ENCODE measurements at regions of chr19 and their contacts with region 1.

Region 1: GRCh38 chr19:42295831-42296525 is 6.0 kb upstream of the PRR19 start:
- DNase-seq: peak; percentile 76
- H3K4me3 ChIP-seq: no peak overlapping the region
- H3K27ac ChIP-seq: peak overlapping the region; percentile 30
- H3K4me1 ChIP-seq: peaks cover under 1% of the 10 kb centered on the region
- H3K27me3 ChIP-seq: no peaks in the 10 kb centered on the region
- CTCF ChIP-seq: peak; percentile 91

Region 2: GRCh38 chr19:42268704-42269477 is 27.1 kb before region 1 on chr19 and contains the start of gene CIC:
- CTCF ChIA-PET with region 1: no interaction called
- POLR2A ChIA-PET with region 1: no interaction called
- intact Hi-C with region 1: no loop called
- DNase-seq: peak; percentile 100
- H3K4me3 ChIP-seq: peak within 1 kb of the TSS; percentile 62
- H3K27ac ChIP-seq: peak within 1 kb of the TSS; percentile 99
- H3K4me1 ChIP-seq: peaks cover 18% of the 10 kb centered on the region
- H3K27me3 ChIP-seq: no peaks in the 10 kb centered on the region
- CTCF ChIP-seq: no peak
- total RNA-seq, gene CIC: 75.8 and 80.3 TPM in 2 replicates

Region 3: GRCh38 chr19:42325896-42326771 is 30.2 kb after region 1 on chr19:
- CTCF ChIA-PET with region 1: no interaction called
- POLR2A ChIA-PET with region 1: no interaction called
- intact Hi-C with region 1: no loop called
- DNase-seq: no peak
- H3K4me3 ChIP-seq: peak overlapping the region; percentile 88
- H3K27ac ChIP-seq: peak overlapping the region; percentile 79
- H3K4me1 ChIP-seq: peaks cover 14% of the 10 kb centered on the region
- H3K27me3 ChIP-seq: peaks cover 9% of the 10 kb centered on the region
- CTCF ChIP-seq: no peak

Region 4: GRCh38 chr19:42343344-42344110 is 47.5 kb after region 1 on chr19:
- CTCF ChIA-PET with region 1: interaction called, 14 read pairs
- POLR2A ChIA-PET with region 1: no interaction called
- intact Hi-C with region 1: no loop called
- DNase-seq: no peak
- H3K4me3 ChIP-seq: no peak overlapping the region
- H3K27ac ChIP-seq: no peak overlapping the region
- H3K4me1 ChIP-seq: no peaks in the 10 kb centered on the region
- H3K27me3 ChIP-seq: no peaks in the 10 kb centered on the region
- CTCF ChIP-seq: peak; percentile 52

Measured in A673 (cell line).